Mammary epithelial cell (primary cell): ENCODE measurements at regions of chr11 and their contacts with region 1.

Region 1: DNA sequence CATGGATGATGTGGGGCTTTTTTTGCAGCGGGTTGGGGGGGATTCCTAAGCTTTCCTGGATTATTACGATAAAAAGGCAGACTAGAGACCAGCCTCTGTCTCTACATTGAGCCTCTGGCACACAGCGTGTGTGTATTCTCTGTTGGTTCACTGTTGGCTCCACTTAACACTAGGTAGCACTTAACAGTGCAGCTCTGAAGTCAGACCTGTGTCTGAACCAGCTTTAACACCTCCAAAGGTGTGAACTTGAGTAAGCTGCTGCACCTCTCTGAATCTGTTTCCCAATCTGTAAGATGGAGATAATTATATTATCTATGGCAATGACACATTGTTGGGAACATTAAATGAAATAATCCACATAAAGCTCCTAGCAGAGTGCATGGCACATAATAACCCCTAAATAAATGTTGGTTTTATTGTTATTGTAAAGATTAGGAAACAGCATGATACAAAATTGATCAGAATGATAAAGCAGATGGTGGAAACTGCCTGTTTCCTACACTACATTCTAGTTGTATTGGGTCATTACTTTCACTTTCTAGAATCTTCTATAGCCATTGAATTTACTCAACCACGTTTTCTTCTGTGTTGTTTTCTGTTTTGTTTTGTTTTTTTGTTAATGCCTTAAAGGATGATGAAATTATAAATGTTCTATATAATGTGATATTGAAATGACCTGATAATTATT is 108.4 kb downstream of the ARL14EP start:
- DNase-seq: no peak
- H3K4me3 ChIP-seq: no peak overlapping the region
- H3K27ac ChIP-seq: no peak overlapping the region
- H3K4me1 ChIP-seq: no peaks in the 10 kb centered on the region
- H3K27me3 ChIP-seq: no peaks in the 10 kb centered on the region
- CTCF ChIP-seq: no peak

Region 2: DNA sequence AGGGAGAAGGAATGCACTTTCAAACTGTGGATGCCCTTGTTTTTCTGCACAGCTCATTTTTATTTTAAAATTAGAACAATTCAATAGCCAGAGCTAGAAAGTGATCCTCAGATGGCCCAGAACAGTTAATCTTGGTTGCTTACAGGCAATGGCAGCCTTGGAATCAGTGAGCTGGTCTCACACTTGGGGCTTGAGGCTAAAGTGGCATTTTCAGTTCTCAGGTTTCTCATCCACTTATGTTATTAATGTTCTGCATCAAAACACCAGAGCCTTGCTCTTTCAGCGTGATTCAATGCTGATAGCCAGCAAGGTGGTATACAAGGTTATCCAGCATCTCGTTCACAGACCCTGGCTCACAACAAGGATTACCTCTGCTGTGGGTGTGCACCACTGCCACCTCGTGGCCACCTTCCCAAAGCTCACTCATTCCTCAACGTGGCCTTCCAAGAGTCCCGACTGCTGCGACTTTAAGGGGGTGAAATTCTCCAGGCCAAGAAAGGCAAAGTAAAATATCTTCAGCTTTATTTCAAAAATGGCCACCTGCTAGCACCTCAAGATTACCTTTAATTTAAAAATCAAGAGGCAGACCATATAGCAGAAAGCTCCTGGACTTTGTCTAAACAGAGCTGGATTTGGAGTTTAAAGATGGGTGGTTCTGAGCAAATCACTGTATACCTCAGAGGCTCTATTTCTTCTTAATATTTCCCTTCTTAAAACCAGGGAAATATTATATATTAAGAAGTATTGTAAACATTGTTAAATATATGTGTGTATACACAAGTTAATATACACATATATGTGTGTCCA is 234.7 kb before region 1 on chr11:
- CTCF ChIA-PET with region 1: no interaction called
- dilution Hi-C with region 1: no loop called
- in situ Hi-C with region 1: no loop called
- intact Hi-C with region 1: no loop called
- DNase-seq: peak; percentile 28
- H3K4me3 ChIP-seq: no peak overlapping the region
- H3K27ac ChIP-seq: no peak overlapping the region
- H3K4me1 ChIP-seq: peaks cover 17% of the 10 kb centered on the region
- H3K27me3 ChIP-seq: no peaks in the 10 kb centered on the region
- CTCF ChIP-seq: peak; percentile 80 to 87

Region 3: DNA sequence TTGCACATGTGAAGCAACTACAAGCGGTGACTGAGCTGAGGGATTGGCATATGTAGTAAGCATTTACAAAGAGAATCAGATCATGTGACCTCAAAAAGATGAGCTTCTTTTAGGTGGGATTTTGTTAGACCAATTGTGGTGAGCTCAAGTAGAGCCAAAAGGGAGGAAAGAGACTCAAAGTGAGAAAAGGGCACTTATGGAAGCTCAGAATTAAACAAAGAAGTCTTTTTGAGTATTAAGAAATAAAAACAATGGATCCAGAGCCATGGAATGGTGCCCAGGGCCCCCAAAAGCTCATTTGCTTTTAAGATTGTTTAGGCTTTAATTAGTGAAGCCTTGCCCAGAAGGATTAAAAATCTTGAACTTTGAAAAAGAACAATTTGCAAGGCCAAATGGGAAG is 401.6 kb after region 1 on chr11:
- CTCF ChIA-PET with region 1: interaction called, 31 read pairs
- dilution Hi-C with region 1: no loop called
- in situ Hi-C with region 1: no loop called
- intact Hi-C with region 1: no loop called
- DNase-seq: no peak
- H3K4me3 ChIP-seq: no peak overlapping the region
- H3K27ac ChIP-seq: no peak overlapping the region
- H3K4me1 ChIP-seq: no peaks in the 10 kb centered on the region
- H3K27me3 ChIP-seq: no peaks in the 10 kb centered on the region
- CTCF ChIP-seq: no peak